IMR-90 (cell line): ENCODE measurements at regions of chr7 and their contacts with region 1.

Region 1: GRCh38 chr7:94095316-94096009 is 91.3 kb upstream of the BET1 start:
- DNase-seq: no peak
- ATAC-seq: no peak
- H3K4me3 ChIP-seq: no peak overlapping the region
- H3K27ac ChIP-seq: no peak overlapping the region
- H3K4me1 ChIP-seq: peaks cover 2% of the 10 kb centered on the region
- H3K27me3 ChIP-seq: no peaks in the 10 kb centered on the region
- CTCF ChIP-seq: no peak
- POLR2A ChIP-seq: no peak
- RAD21 ChIP-seq: no peak

Region 2: DNA sequence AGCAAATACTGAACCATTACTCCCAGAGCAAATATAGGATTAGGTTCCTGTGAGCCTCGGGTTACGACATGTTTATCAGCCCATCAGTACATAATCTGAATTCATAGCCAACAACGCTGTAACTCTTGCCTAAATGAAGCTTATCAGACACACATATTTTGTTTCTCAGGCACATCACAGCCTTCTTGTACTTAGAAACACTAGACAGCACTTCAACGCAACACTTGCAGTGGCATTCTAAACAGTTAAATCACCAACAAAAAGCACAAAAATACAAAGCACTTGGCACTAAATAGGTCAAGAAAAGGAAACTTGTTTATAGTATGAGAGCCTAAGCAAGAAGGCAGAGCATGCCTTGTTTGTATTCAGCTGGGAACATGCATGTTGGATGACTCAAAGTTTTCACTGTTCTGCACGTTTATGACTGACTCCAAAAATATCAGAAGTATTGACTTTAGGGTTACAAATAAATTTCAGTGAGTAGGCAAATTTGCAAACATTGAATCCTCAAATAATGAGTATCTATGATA is 788.3 kb before region 1 on chr7:
- CTCF ChIA-PET with region 1: interaction called, 10 read pairs
- POLR2A ChIA-PET with region 1: no interaction called
- dilution Hi-C with region 1: no loop called
- in situ Hi-C with region 1: no loop called
- intact Hi-C with region 1: no loop called
- DNase-seq: peak; percentile 86
- ATAC-seq: peak; percentile 94
- H3K4me3 ChIP-seq: no peak overlapping the region
- H3K27ac ChIP-seq: no peak overlapping the region
- H3K4me1 ChIP-seq: peaks cover 4% of the 10 kb centered on the region
- H3K27me3 ChIP-seq: no peaks in the 10 kb centered on the region
- CTCF ChIP-seq: no peak
- POLR2A ChIP-seq: no peak
- RAD21 ChIP-seq: no peak

Region 3: DNA sequence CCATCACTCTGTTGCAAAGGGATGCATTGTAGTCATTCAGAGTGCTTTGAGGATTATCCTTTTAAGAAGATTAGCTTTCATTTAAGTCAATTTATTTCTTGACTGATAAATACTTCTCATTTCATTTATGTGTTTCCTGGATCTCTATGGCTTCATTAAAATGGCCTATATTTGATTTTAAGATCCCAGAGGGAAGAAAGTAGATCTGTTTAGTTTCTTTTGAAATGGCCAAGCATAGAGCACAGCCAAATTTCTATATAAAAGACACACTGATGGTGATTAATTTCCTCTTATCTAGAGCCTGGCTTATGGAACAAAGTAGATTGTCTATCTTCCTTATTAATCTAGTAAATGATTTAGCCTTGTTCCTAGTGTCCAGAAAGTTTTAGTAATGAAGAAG is 391.2 kb before region 1 on chr7:
- CTCF ChIA-PET with region 1: no interaction called
- POLR2A ChIA-PET with region 1: no interaction called
- dilution Hi-C with region 1: no loop called
- in situ Hi-C with region 1: no loop called
- intact Hi-C with region 1: no loop called
- DNase-seq: no peak
- ATAC-seq: no peak
- H3K4me3 ChIP-seq: no peak overlapping the region
- H3K27ac ChIP-seq: no peak overlapping the region
- H3K4me1 ChIP-seq: no peaks in the 10 kb centered on the region
- H3K27me3 ChIP-seq: no peaks in the 10 kb centered on the region
- CTCF ChIP-seq: no peak
- POLR2A ChIP-seq: no peak
- RAD21 ChIP-seq: no peak

Region 4: DNA sequence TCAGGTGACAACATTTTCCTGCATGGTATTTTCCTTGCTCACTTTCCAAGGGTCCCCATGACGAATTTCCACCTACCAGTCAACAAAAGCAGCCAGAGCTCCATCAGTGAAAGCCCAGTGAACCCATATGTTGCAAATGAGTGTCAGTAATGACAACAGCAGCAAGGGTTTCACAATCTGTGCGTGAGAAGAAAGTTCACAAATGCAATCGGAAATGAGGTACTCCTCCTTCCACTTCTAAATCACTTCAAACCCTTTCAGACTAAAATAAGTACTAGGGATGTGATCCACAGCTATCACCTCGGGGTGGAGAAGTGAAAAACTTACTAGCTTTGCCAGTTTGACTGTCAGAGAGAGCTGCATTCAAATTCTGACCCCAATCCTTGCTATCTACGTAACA is 35.7 kb before region 1 on chr7:
- CTCF ChIA-PET with region 1: no interaction called
- POLR2A ChIA-PET with region 1: no interaction called
- dilution Hi-C with region 1: no loop called
- in situ Hi-C with region 1: no loop called
- intact Hi-C with region 1: no loop called
- DNase-seq: peak; percentile 70
- ATAC-seq: no peak
- H3K4me3 ChIP-seq: no peak overlapping the region
- H3K27ac ChIP-seq: no peak overlapping the region
- H3K4me1 ChIP-seq: peaks cover 9% of the 10 kb centered on the region; the same call in 1 of the 2 replicates
- H3K27me3 ChIP-seq: no peaks in the 10 kb centered on the region
- CTCF ChIP-seq: no peak
- POLR2A ChIP-seq: no peak
- RAD21 ChIP-seq: no peak

Region 5: GRCh38 chr7:94266238-94266644 is 170.8 kb after region 1 on chr7:
- CTCF ChIA-PET with region 1: no interaction called
- POLR2A ChIA-PET with region 1: no interaction called
- dilution Hi-C with region 1: no loop called
- in situ Hi-C with region 1: no loop called
- intact Hi-C with region 1: no loop called
- DNase-seq: no peak
- ATAC-seq: no peak
- H3K4me3 ChIP-seq: no peak overlapping the region
- H3K27ac ChIP-seq: no peak overlapping the region
- H3K4me1 ChIP-seq: no peaks in the 10 kb centered on the region; the same call in 1 of the 2 replicates
- H3K27me3 ChIP-seq: no peaks in the 10 kb centered on the region
- CTCF ChIP-seq: no peak
- POLR2A ChIP-seq: no peak
- RAD21 ChIP-seq: no peak

Region 6: GRCh38 chr7:94313926-94314325 is 218.5 kb after region 1 on chr7:
- CTCF ChIA-PET with region 1: no interaction called
- POLR2A ChIA-PET with region 1: no interaction called
- dilution Hi-C with region 1: no loop called
- in situ Hi-C with region 1: no loop called
- intact Hi-C with region 1: no loop called
- DNase-seq: peak; percentile 55
- ATAC-seq: peak; percentile 24; the same call in 1 of the 2 replicates
- H3K4me3 ChIP-seq: no peak overlapping the region
- H3K27ac ChIP-seq: no peak overlapping the region
- H3K4me1 ChIP-seq: peaks cover 3% of the 10 kb centered on the region
- H3K27me3 ChIP-seq: no peaks in the 10 kb centered on the region
- CTCF ChIP-seq: no peak
- POLR2A ChIP-seq: no peak
- RAD21 ChIP-seq: no peak